ENCODE measurements at regions of chr3 and their contacts with region 1.

Region 1: GRCh38 chr3:109874896-109875708 is 537.8 kb upstream of the DPPA4 start:
- DNase-seq: no peak
- H3K4me3 ChIP-seq: no peak overlapping the region
- H3K27ac ChIP-seq: no peak overlapping the region
- H3K4me1 ChIP-seq: no peaks in the 10 kb centered on the region
- H3K27me3 ChIP-seq: no peaks in the 10 kb centered on the region
- CTCF ChIP-seq: no peak
- EP300 ChIP-seq: no peak
- POLR2A ChIP-seq: no peak

Region 2: GRCh38 chr3:110918963-110919362 is 1043.9 kb after region 1 on chr3:
- in situ Hi-C with region 1: no loop called
- intact Hi-C with region 1: no loop called
- DNase-seq: no peak
- H3K4me3 ChIP-seq: no peak overlapping the region
- H3K27ac ChIP-seq: no peak overlapping the region
- H3K4me1 ChIP-seq: no peaks in the 10 kb centered on the region
- H3K27me3 ChIP-seq: no peaks in the 10 kb centered on the region
- CTCF ChIP-seq: no peak
- EP300 ChIP-seq: no peak
- POLR2A ChIP-seq: no peak

Region 3: DNA sequence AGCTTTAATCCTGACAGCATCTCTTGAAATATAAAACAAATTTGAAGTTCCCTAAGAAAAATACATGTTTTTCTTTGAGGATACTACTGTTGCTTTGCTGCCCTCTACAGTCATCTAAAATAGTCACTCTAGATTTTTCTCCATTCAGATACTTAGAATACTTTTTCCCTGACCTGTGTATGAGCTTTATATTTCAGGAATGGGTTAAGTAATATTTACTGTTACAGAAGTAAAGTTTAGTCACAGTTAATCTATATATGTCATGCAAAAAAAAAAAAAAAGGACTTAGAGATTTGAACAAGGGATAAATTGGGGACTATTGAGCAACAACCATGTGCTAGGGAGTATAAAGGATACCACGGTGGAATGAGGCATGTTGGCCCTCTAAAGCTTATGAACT is 1205.3 kb after region 1 on chr3:
- in situ Hi-C with region 1: no loop called
- intact Hi-C with region 1: loop called (anchors 5 kb)
- DNase-seq: no peak
- H3K4me3 ChIP-seq: no peak overlapping the region
- H3K27ac ChIP-seq: no peak overlapping the region
- H3K4me1 ChIP-seq: peaks cover 5 to 52% (median 15%) of the 10 kb centered on the region in 4 donors
- H3K27me3 ChIP-seq: no peaks in the 10 kb centered on the region
- CTCF ChIP-seq: peak; percentile 34 to 50 (median 49)
- EP300 ChIP-seq: no peak
- POLR2A ChIP-seq: no peak